Activated CD8-positive, alpha-beta T cell treated with anti-CD3 and anti-CD28 coated beads, Interleukin-2, amount 10 ng/mL, durations not matched to agents 7 days and 5 days (primary cell): ENCODE measurements at regions of chr9 and their contacts with region 1.

Region 1: GRCh38 chr9:127734747-127735529 is at the start of gene TOR2A:
- DNase-seq: peak; percentile 99
- ATAC-seq: peak; percentile 93
- H3K4me3 Mint-ChIP-seq: peak within 1 kb of the TSS; percentile 73
- H3K27ac Mint-ChIP-seq: peak within 1 kb of the TSS; percentile 86
- H3K4me1 Mint-ChIP-seq: peaks cover 25% of the 10 kb centered on the region
- H3K27me3 Mint-ChIP-seq: no peaks in the 10 kb centered on the region
- total RNA-seq, gene TOR2A: 27.0 to 29.1 TPM

Region 2: DNA sequence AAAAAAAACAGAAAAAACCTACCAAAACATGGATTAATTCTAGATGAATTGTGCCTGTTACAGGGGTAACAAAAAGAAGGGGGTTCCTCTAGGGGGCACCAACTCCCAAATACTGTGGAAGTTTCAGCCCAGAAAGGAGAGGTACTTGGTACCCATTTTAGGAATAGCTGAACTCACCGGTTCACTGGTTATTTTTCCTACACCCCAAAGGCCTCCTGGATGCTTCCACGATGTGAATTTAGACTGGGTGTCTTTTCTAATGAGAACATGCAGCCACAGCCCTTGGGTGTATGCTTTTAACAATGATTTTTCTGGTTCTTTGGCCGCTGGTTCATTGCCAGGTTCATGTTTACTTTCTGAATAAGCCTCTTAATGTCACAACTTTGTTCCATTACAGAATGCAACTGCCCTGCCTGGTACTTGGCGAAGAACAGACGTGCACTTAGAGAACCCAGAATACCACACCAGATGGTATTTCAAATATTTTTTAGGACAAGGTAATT is 423.6 kb before region 1 on chr9:
- CTCF ChIA-PET with region 1: no interaction called
- POLR2A ChIA-PET with region 1: no interaction called
- DNase-seq: peak; percentile 68
- ATAC-seq: peak; percentile 55
- H3K4me3 Mint-ChIP-seq: no peak overlapping the region
- H3K27ac Mint-ChIP-seq: no peak overlapping the region
- H3K4me1 Mint-ChIP-seq: no peaks in the 10 kb centered on the region
- H3K27me3 Mint-ChIP-seq: peaks cover 22% of the 10 kb centered on the region

Region 3: DNA sequence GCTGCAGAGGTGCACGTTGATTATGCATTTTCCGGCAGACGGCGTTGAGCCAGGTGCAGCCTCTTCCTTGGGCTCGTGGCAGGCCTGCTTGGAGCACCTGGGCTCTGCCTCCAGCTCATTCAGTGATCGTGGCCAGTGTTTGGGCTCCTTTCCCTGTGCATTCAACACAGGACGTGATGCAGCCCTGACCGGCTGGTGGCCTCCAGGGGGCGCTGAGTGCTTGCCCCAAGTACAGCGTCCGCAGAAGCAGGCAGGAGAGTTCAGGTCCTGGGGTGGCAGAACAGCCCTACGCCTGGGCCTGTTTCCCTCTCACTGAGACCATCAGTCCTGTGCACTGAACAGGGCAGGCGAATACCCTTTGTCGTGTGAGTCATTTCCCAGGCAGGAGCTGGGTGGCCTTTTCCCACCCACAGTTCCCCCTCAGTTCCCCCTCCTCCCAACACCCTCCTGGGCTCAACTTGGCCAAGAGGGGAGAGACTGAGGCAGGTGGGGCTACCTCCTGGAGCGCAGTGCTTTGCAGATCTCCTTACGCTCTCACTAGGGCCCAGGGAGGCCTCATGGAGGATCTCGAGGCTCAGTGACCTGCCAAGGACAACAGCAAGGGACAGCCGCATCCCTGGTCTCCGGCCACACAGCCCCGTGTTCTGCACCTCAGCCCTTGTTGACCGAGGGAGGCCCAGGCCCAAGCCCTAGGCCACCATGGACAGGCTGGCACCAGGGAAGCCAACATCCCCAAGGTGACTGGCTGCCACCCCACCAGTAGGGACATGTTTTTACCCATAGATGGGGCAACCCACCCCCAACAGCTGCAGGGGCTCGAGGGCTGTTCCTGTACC is 230.8 kb before region 1 on chr9:
- CTCF ChIA-PET with region 1: interaction called, 20 read pairs
- POLR2A ChIA-PET with region 1: no interaction called
- DNase-seq: peak; percentile 88
- ATAC-seq: peak; percentile 91
- H3K4me3 Mint-ChIP-seq: no peak overlapping the region
- H3K27ac Mint-ChIP-seq: peak overlapping the region; percentile 57
- H3K4me1 Mint-ChIP-seq: peaks cover 2% of the 10 kb centered on the region
- H3K27me3 Mint-ChIP-seq: no peaks in the 10 kb centered on the region

Region 4: GRCh38 chr9:127568971-127569885 is 165.7 kb before region 1 on chr9:
- CTCF ChIA-PET with region 1: interaction called, 12 read pairs
- POLR2A ChIA-PET with region 1: no interaction called
- DNase-seq: peak; percentile 88
- ATAC-seq: peak; percentile 81
- H3K4me3 Mint-ChIP-seq: peak overlapping the region; percentile 86
- H3K27ac Mint-ChIP-seq: peak overlapping the region; percentile 92
- H3K4me1 Mint-ChIP-seq: peaks cover 69% of the 10 kb centered on the region
- H3K27me3 Mint-ChIP-seq: no peaks in the 10 kb centered on the region

Region 5: DNA sequence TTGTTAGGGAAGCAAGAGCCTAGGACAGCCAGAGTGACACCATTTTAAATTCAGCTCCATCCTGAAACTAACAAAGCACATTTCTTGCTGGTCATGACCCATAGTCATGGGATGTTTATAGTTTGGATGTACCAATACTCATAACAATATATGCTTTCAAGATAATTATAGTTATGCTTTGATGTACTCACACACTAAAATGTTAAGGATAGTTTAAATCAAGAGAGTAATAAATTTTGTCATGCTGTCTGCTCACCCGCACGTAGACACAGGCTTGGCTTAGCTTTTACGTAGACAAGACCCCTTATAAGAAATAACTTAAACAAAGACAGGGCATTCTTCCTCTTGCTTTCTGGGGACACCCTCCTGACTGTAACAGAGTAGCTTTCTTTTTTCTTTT is 131.7 kb before region 1 on chr9:
- CTCF ChIA-PET with region 1: interaction called, 24 read pairs
- POLR2A ChIA-PET with region 1: interaction called, 3 read pairs
- DNase-seq: no peak
- ATAC-seq: no peak
- H3K4me3 Mint-ChIP-seq: no peak overlapping the region
- H3K27ac Mint-ChIP-seq: no peak overlapping the region
- H3K4me1 Mint-ChIP-seq: peaks cover 11% of the 10 kb centered on the region
- H3K27me3 Mint-ChIP-seq: peaks cover 8% of the 10 kb centered on the region

Region 6: DNA sequence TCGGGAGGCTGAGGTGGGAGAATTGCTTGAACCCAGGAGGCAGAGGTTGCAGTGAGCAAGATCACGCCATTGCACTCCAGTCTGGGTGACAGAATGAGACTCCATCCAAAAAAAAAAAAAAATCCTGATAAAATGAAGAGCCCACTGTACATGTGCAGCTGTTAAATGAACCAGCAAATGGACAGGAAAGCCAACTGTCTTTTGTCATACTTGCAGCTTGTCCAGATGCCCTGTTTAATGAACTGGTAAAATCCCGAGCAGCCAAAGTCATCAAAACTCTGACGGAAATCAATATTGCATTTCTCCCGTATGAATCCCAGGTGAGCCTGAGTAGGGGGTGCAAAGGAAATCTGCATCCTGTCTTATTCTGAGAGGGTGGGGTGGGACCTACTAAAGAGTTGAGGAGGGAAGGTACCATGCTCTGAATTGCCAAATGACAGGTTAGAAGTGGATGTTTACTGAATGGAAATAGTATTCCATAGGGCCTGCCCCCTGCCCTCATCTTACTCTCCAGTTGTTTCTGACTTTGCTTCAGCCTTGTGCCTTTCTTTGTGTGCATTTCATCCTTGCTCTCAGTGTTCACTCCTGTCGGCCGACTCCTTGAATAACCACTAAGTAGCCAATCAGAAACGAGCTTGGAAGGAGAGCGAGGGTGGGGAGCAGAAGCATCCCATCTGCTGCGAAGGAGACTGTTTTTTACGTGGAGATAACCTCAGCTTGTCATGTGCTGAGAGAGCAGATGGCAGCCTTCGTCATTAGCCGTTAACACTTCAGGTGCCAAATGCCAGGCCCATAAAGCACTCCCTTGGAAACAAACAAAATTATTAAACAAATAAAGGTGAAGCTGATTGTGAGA is 73.8 kb before region 1 on chr9:
- CTCF ChIA-PET with region 1: no interaction called
- POLR2A ChIA-PET with region 1: no interaction called
- DNase-seq: no peak
- ATAC-seq: no peak
- H3K4me3 Mint-ChIP-seq: no peak overlapping the region
- H3K27ac Mint-ChIP-seq: no peak overlapping the region
- H3K4me1 Mint-ChIP-seq: no peaks in the 10 kb centered on the region
- H3K27me3 Mint-ChIP-seq: no peaks in the 10 kb centered on the region

Region 7: DNA sequence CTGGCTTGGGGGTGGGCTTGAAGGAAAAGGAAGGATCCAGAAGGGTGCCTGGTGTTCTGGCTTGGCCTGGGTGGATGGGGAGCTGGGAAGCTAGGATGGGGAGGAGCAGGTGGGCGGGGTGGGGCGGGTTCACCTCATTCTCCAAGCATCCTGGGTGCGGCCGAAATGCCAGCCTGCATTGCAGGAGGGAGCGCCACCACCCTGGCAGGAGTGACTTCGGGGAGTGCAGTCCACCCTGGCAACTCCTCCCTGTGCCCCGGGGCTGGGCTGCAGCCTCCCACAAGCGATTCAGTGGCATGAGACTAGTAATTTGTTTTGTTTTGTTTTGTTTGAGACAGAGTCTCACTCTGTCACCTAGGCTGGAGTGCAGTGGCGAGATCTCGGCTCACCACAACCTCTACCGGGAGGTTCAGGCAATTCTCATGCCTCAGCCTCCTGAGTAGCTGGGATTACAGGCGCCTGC is 13.5 kb before region 1 on chr9:
- CTCF ChIA-PET with region 1: interaction called, 35 read pairs
- POLR2A ChIA-PET with region 1: interaction called, 3 read pairs
- DNase-seq: no peak
- ATAC-seq: peak; percentile 34
- H3K4me3 Mint-ChIP-seq: peak overlapping the region; percentile 31
- H3K27ac Mint-ChIP-seq: peak overlapping the region; percentile 65
- H3K4me1 Mint-ChIP-seq: peaks cover 27% of the 10 kb centered on the region
- H3K27me3 Mint-ChIP-seq: no peaks in the 10 kb centered on the region

Region 8: DNA sequence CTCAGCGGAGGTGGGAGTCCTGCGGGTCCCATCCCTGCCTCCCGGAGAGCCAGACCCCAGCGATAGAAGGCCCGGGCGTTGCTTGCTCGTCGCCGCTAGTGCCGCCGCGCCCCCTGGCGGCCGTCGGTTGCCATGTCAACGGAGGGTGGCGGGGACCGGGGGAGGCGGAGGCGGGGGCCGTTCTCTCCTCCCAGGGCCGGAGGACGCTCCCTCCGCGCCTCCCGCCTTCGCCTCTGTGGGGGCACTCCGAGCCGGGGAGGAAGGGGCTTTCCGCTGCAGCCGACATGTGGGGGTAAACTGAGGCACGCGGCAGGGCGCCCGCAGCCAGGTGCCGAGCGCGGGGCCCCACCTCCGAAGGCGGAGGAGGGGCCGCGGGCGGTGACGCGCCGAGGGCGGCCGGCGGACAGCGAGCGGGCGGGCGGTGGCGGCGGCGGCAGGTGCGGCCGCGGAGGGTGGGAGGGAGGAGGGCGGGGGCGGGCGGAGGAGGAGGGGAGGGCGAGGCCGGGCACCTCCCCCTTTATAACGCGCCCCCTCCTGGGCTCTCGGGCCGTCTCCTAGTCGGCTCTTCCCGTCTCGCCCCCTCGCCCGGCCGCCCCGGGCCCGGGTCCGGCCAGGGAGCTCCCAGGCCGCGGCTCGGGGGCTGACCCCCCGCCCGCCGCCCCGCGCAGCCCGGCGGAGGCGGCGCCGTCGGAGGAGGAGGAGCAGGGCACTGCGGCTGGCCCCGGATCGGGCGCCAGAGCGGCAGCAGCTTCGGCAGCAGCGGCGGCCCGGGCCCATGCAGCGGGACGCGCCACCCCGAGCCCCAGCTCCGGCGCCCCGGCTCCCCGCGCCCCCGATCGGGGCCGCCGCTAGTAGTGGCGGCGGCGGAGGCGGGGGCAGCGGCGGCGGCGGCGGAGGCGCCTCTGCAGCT is 50.3 kb after region 1 on chr9:
- CTCF ChIA-PET with region 1: interaction called, 59 read pairs
- POLR2A ChIA-PET with region 1: interaction called, 11 read pairs
- DNase-seq: peak; percentile 93
- ATAC-seq: peak; percentile 46
- H3K4me3 Mint-ChIP-seq: peak overlapping the region; percentile 77
- H3K27ac Mint-ChIP-seq: peak overlapping the region; percentile 95
- H3K4me1 Mint-ChIP-seq: peaks cover 75% of the 10 kb centered on the region
- H3K27me3 Mint-ChIP-seq: no peaks in the 10 kb centered on the region

Region 9: GRCh38 chr9:127812936-127813675 is 78.2 kb after region 1 on chr9:
- CTCF ChIA-PET with region 1: no interaction called
- POLR2A ChIA-PET with region 1: no interaction called
- DNase-seq: no peak
- ATAC-seq: no peak
- H3K4me3 Mint-ChIP-seq: no peak overlapping the region
- H3K27ac Mint-ChIP-seq: no peak overlapping the region
- H3K4me1 Mint-ChIP-seq: peaks cover 3% of the 10 kb centered on the region
- H3K27me3 Mint-ChIP-seq: no peaks in the 10 kb centered on the region

Region 10: GRCh38 chr9:127916665-127917613 is 182.0 kb after region 1 on chr9 and contains the start of gene ST6GALNAC4:
- CTCF ChIA-PET with region 1: interaction called, 30 read pairs
- POLR2A ChIA-PET with region 1: interaction called, 6 read pairs
- DNase-seq: peak; percentile 96
- ATAC-seq: peak; percentile 93
- H3K4me3 Mint-ChIP-seq: peak within 1 kb of the TSS; percentile 89
- H3K27ac Mint-ChIP-seq: peak within 1 kb of the TSS; percentile 95
- H3K4me1 Mint-ChIP-seq: peaks cover 75% of the 10 kb centered on the region
- H3K27me3 Mint-ChIP-seq: no peaks in the 10 kb centered on the region
- total RNA-seq, gene ST6GALNAC4: 37.0 to 39.7 TPM